ENCODE measurements at regions of chr11 and their contacts with region 1.

Region 1: DNA sequence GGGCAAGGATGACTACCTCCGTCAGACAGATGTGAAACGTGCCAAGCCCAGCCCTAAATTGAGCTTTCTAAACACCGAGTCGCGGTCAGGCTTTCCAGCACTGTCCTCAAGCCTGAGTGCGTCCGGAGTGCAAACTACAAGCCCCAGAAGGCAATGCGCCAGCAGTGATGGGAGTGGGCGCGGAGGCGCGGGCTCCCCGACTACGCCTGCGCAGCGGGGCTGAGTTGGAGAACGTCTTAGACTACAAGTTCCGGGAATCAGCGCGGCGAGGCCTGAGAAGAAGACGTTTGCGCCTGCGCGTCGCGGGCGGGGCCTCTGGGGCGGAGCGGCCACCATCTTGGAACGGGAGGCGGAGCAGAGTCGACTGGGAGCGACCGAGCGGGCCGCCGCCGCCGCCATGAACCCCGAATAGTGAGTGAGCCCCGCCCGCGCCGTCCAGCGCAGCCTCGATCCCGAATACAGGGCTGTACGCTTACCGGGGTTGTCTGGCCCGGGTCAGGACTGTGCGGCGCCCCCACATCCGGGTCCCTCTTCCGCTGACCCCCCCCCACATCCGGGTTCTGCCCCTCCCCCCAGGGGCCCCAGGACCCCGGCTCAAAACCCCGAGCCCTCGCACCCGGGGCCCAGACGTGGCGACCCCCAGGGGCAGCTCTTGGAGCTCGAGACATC is at the start of gene RAB1B:
- DNase-seq: peak; percentile 100
- ATAC-seq: peak; percentile 84
- H3K4me3 ChIP-seq: peak within 1 kb of the TSS; percentile 79 to 99 (median 86)
- H3K27ac ChIP-seq: peak within 1 kb of the TSS; percentile 92 to 99 (median 96)
- H3K4me1 ChIP-seq: peaks cover 19 to 27% of the 10 kb centered on the region in 2 donors
- H3K27me3 ChIP-seq: no peaks in the 10 kb centered on the region
- CTCF ChIP-seq: no peak
- POLR2A ChIP-seq: peak in 1 of 2 donors; percentile 67
- total RNA-seq, gene RAB1B: 96.0 to 194 (median 130) TPM

Region 2: GRCh38 chr11:66288671-66289547 is 20.5 kb after region 1 on chr11 and contains the start of gene YIF1A:
- in situ Hi-C with region 1: no loop called
- intact Hi-C with region 1: loop called (anchors 1 kb)
- DNase-seq: peak; percentile 99 to 100
- ATAC-seq: peak; percentile 95 to 97
- H3K4me3 ChIP-seq: peak within 1 kb of the TSS; percentile 80 to 91 (median 85)
- H3K27ac ChIP-seq: peak within 1 kb of the TSS; percentile 84 to 93 (median 92)
- H3K4me1 ChIP-seq: peaks cover 20 to 36% of the 10 kb centered on the region in 2 donors
- H3K27me3 ChIP-seq: peaks cover 14 to 25% (median 21%) of the 10 kb centered on the region in 3 donors
- CTCF ChIP-seq: no peak
- POLR2A ChIP-seq: peak; percentile 93 to 97
- total RNA-seq, gene YIF1A: 106 to 137 (median 113) TPM

Region 3: DNA sequence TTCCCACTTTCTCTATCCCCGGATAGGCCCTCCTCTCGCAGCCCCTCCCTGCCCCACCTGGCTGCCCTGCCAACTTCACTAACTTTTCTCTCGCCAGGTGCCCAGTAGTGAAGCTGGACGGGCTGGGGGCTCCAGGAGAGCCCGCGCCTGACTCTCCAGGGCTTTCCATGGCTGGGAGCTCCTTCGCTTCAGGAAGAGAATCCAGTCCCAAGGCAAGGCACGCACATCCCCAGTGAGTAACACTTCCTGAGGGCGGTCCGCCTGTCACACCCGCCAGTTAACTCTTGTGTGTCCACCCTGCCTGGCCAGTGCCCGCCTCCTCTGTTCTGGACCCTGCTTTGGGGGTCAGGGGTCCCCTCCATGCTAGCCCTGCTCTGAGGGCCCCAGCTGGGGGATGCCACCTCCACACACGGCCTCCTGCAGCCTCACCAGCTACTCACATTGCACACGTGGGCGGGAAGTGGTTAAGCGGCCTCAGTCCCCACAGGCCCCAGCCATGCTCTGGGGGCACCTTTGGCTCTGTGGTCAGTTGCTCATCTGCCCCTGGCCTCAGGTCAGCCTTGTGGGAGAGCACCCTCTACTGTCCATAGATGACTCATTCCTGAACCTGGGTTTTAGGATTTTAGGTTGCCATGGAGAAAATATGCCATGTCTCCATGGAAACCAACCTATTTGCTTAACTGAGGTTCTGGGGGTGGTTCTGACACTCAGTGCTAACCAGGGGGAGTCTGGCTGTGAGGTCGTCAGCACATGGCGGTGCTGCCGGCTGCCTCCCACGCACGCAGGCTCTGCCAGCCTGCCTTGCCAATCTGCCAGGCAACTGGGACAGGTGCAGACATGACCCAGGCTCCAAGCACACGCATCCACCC is 68.1 kb after region 1 on chr11 and contains the start of gene RIN1:
- in situ Hi-C with region 1: no loop called
- intact Hi-C with region 1: loop called (anchors 5 kb)
- DNase-seq: peak; percentile 42 to 70
- ATAC-seq: peak; percentile 78 to 84
- H3K4me3 ChIP-seq: peak within 1 kb of the TSS; percentile 57 to 65 (median 60)
- H3K27ac ChIP-seq: peak within 1 kb of the TSS; percentile 74 to 79 (median 76)
- H3K4me1 ChIP-seq: peaks cover 25 to 26% of the 10 kb centered on the region in 2 donors
- H3K27me3 ChIP-seq: no peaks in the 10 kb centered on the region
- CTCF ChIP-seq: peak; percentile 27 to 55 (median 48)
- POLR2A ChIP-seq: peak; percentile 13 to 40
- total RNA-seq, gene RIN1: 1.9 to 9.7 (median 7.0) TPM